ENCODE measurements at regions of chr3 and their contacts with region 1.

Region 1: GRCh38 chr3:177777699-177778098 is 580.4 kb upstream of the TBL1XR1 start:
- DNase-seq: peak; percentile 52
- ATAC-seq: peak; percentile 97
- H3K4me3 ChIP-seq: no peak overlapping the region
- H3K27ac ChIP-seq: no peak overlapping the region
- H3K4me1 ChIP-seq: no peaks in the 10 kb centered on the region
- H3K27me3 ChIP-seq: 0 out of 5 replicates have a peak, but pooled peaks cover 0 to 2% of the 10 kb centered on the region in 2 experiments
- CTCF ChIP-seq: peak; percentile 81
- EP300 ChIP-seq: no peak
- POLR2A ChIP-seq: no peak
- RAD21 ChIP-seq: peak; percentile 68

Region 2: GRCh38 chr3:176872771-176873209 is 904.9 kb before region 1 on chr3:
- CTCF ChIA-PET with region 1: no interaction called
- POLR2A ChIA-PET with region 1: no interaction called
- in situ Hi-C with region 1: no loop called
- intact Hi-C with region 1: loop called (anchors 5 kb)
- DNase-seq: peak; percentile 38
- ATAC-seq: peak; percentile 94
- H3K4me3 ChIP-seq: no peak overlapping the region
- H3K27ac ChIP-seq: no peak overlapping the region
- H3K4me1 ChIP-seq: no peaks in the 10 kb centered on the region
- H3K27me3 ChIP-seq: no peaks in the 10 kb centered on the region
- CTCF ChIP-seq: peak; percentile 90
- EP300 ChIP-seq: no peak
- POLR2A ChIP-seq: no peak
- RAD21 ChIP-seq: peak; percentile 53; the same call in 1 of the 2 replicates

Region 3: DNA sequence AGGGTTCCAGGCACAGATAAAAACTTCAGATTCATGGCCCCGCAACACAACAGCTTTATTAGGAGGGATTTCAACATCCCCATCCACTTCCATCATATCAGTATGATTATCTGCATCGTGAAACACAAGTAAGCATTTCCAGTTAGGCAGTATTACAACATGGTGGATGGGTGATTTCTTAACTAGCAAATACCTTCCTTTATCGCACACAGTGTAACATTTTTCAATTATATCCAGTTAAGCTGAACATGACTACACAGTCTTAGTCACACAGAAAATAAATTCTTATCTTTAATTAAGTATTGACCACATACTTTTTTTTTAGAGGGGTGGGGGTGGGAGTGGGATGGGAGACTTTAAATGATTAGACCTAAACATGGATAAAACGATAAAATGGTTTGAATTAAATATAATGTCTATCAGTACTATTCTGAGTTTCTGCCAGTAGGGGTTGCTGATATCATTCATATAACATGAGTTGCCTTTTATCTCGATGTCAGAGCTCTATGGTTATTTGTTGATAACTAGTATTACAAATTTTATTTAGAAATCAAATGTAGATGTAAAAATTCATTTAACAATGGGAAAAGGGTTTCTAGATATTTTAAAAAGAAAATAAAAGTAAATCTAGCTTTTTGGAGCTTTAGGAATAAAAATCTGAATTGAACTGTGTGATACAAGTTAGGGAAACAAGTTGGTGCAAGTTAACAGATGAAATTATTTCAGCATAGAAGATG is 727.0 kb before region 1 on chr3:
- CTCF ChIA-PET with region 1: no interaction called
- POLR2A ChIA-PET with region 1: no interaction called
- in situ Hi-C with region 1: no loop called
- intact Hi-C with region 1: loop called (anchors 5 kb)
- DNase-seq: peak; percentile 13
- ATAC-seq: no peak
- H3K4me3 ChIP-seq: no peak overlapping the region
- H3K27ac ChIP-seq: no peak overlapping the region
- H3K4me1 ChIP-seq: no peaks in the 10 kb centered on the region
- H3K27me3 ChIP-seq: no peaks in the 10 kb centered on the region
- CTCF ChIP-seq: peak; percentile 38
- EP300 ChIP-seq: no peak
- POLR2A ChIP-seq: no peak
- RAD21 ChIP-seq: no peak

Region 4: DNA sequence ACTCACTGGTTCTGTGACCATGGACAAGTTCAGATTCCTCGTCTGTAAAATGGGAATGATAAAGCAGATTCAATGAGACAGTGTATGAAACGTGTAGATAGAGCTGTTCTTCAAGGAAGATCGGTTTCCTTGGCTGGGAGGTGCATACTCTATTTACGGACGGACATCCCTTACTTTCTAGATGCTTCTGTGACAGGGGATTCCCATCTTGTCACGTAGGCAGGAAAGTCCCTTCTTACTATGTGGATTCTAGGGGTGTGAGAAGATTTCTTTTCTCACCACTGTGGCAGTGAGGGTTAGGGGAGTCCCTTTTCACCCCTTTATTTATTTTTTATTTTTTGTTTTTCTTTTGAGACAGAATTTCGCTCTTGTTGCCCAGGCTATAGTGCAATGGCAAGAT is 399.5 kb before region 1 on chr3:
- CTCF ChIA-PET with region 1: no interaction called
- POLR2A ChIA-PET with region 1: no interaction called
- in situ Hi-C with region 1: no loop called
- intact Hi-C with region 1: loop called (anchors 5 kb)
- DNase-seq: no peak
- ATAC-seq: no peak
- H3K4me3 ChIP-seq: no peak overlapping the region
- H3K27ac ChIP-seq: no peak overlapping the region
- H3K4me1 ChIP-seq: peaks cover 5% of the 10 kb centered on the region; the same call in 1 of the 2 replicates
- H3K27me3 ChIP-seq: peaks cover 0 to 6% of the 10 kb centered on the region in 2 experiments; a peak in 1 of 5 replicates
- CTCF ChIP-seq: no peak
- EP300 ChIP-seq: no peak
- POLR2A ChIP-seq: no peak
- RAD21 ChIP-seq: no peak

Region 5: GRCh38 chr3:177694316-177694715 is 83.4 kb before region 1 on chr3:
- CTCF ChIA-PET with region 1: no interaction called
- POLR2A ChIA-PET with region 1: no interaction called
- in situ Hi-C with region 1: no loop called
- intact Hi-C with region 1: no loop called
- DNase-seq: no peak
- ATAC-seq: no peak
- H3K4me3 ChIP-seq: no peak overlapping the region
- H3K27ac ChIP-seq: no peak overlapping the region
- H3K4me1 ChIP-seq: no peaks in the 10 kb centered on the region
- H3K27me3 ChIP-seq: no peaks in the 10 kb centered on the region; a peak in 1 of 5 replicates
- CTCF ChIP-seq: no peak
- EP300 ChIP-seq: no peak
- POLR2A ChIP-seq: no peak
- RAD21 ChIP-seq: no peak

Measured in HepG2 (cell line).